Right ventricle myocardium inferior (tissue), 1 donor: ENCODE measurements at regions of chr11 and their contacts with region 1.

Region 1: DNA sequence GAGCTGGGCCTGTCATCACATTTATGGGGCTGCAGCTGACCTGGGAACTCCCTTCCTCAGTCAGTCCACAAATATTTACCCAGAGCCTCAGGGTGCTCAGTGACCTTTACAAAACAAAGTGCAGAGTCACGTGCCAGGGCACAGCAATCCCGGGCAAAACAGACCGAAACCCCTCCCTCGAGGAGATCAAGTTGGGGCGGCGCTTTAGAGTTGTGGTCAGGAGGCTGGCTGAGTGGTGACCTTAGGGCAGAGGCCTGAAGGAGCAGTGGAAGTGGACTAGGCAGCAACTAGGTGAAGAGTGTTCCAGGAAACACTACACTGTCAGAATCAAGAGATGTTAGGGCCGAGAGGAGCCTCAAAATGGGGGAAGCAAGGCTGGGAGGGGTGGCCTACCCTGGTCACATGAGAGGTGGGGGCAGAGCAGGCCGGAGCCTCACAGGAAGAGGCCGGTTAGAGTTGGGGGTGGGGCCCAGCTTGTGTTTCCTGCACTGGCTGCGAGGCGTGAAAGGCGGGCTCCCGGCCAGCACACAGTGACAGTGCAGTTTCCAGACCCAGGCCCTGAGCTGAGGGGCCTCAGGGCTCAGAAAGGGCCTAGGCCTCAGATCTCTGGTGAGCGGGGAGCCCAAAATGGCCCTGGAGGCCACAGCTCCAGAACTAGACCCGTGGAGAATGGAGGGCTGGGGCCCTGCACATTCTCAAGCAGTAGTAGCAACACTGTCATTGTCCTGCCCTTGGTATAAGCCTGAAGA is 3.7 kb upstream of the NEAT1 start:
- DNase-seq: peak; percentile 99
- ATAC-seq: peak; percentile 51

Region 2: DNA sequence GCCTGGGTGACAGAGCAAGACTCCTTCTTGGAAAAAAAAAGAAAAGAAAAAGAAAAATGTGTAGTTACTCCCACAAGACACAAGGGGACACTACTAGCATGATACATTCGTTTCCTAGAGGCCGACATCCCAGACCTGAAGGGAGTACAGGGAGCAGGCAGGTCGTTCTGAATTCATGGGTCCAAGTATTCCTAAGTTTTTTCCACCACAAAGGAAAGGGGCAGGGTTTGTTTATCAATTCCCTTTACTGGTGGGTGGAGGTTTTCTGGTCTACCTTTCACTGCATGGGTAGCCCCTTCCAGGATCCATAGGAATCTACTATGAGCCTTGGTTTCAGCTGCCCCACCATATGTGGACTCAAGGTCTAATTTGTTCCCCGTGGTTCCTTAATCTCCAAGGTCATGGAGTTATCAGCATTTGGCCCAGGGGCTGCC is 52.5 kb before region 1 on chr11:
- intact Hi-C with region 1: loop called (anchors 2 kb)
- DNase-seq: no peak
- ATAC-seq: peak; percentile 81

Region 3: GRCh38 chr11:65471410-65471762 is 52.5 kb after region 1 on chr11:
- intact Hi-C with region 1: loop called (anchors 2 kb)
- DNase-seq: peak; percentile 85
- ATAC-seq: peak; percentile 89

Region 4: GRCh38 chr11:65491614-65492386 is 72.9 kb after region 1 on chr11:
- intact Hi-C with region 1: no loop called
- DNase-seq: peak; percentile 88
- ATAC-seq: peak; percentile 31

Region 5: DNA sequence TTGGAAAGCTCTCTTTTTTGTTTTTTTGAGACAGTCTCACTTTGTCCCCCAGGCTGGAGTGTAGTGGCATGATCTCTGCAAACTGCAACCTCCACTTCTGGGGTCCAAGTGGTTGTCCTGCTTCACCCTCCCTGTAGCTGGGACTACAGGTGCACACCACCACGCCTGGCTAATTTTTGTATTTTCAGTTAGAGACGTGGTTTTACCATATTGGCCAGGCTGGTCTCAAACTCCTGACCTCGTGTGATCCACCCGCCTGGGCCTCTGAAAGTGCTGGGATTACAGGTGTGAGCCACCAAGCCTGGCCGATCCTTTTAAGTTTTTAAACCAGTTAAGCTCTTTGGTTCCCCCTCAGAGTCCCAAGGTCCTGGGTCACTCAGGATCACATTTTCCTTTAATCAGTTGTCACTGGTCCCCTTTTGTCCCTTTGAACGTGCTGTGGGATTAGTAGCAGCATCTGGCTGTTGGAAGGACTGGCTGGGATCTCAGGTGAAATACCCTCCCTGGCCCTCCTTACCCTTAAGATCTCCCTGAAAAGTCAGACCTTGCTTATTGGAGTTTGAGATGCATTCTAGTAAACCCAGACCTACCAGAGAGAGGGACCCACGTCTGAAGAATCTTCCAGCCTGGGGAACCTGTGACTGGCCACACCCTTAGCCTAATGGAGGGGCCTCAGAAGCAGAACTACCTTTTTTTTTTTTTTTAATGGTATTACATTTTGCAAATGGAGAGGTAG is 88.1 kb after region 1 on chr11:
- intact Hi-C with region 1: loop called (anchors 1 kb)
- DNase-seq: no peak
- ATAC-seq: peak; percentile 8

Region 6: GRCh38 chr11:65569973-65570918 is 151.4 kb after region 1 on chr11 and contains the start of gene ZNRD2:
- intact Hi-C with region 1: loop called (anchors 5 kb)
- DNase-seq: peak; percentile 99
- ATAC-seq: peak; percentile 90
- total RNA-seq, gene ZNRD2: 23.3 TPM